ENCODE measurements at regions of chr1 and their contacts with region 1.

Region 1: DNA sequence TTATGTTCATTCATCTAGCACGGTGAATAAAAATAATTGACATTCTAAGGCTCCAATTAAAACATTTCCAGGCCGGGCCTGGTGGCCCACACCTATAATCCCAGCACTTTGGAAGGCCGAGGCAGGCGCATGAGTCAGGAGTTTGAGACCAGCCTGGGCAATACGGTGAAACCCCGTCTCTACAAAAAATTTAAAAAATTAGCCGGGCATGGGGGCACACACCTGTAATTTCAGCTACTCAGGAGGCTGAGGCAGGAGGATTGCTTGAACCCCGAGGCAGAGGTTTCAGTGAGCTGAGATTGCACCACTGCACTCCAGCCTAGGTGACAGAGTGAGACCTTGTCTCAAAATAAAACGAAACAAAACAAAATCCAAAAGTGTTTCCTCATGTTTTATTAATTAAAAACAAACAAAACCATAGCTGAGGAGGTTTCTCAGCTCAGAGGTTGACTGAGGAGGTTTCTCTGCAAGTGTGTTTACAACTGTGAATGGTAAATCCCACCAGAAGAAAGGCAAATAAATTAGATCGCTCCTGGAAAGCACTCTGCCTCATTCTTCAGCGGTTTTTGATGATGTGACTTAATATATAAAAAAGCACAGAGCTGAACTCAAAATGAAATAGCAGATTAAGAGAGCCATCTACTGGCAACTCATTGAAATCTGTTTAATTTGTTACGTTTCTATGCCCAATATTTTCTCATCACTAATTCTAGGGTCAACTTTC is 37.7 kb upstream of the ATG4C start:
- DNase-seq: no peak
- H3K4me3 Mint-ChIP-seq: peak overlapping the region; percentile 17
- H3K27ac Mint-ChIP-seq: no peak overlapping the region
- H3K4me1 Mint-ChIP-seq: no peaks in the 10 kb centered on the region
- H3K27me3 Mint-ChIP-seq: no peaks in the 10 kb centered on the region
- CTCF ChIP-seq: peak; percentile 46

Region 2: DNA sequence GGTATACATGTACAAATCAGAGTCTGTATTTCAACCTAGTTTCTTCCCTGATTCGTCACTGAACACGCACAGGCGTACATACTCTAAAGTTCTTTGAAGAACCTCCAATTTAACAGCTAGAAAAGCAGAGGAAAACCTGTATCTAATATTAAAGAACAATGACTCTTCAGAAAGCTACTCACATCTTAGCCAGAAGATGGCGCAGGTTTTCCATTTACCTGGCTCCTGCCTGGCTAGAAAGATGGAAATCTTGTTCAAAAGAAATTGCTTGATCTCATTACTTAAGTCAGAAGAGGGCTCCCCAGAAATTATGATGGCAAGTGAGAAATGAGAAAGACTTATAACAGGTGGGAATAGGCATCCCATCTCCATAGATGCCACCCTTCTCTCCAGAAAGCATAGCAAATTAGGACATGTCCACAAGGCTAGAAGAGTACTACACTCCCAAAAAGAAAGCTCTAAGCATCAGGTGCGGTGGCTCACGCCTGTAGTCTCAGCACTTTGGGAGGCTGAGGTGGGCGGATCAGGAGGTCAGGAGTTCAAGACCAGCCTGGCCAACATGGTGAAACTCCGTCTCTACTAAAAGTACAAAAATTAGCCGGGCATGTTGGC is 570.6 kb before region 1 on chr1:
- CTCF ChIA-PET with region 1: no interaction called
- intact Hi-C with region 1: loop called (anchors 2 kb)
- DNase-seq: peak; percentile 40
- H3K4me3 Mint-ChIP-seq: no peak overlapping the region
- H3K27ac Mint-ChIP-seq: no peak overlapping the region
- H3K4me1 Mint-ChIP-seq: peaks cover 7% of the 10 kb centered on the region
- H3K27me3 Mint-ChIP-seq: no peaks in the 10 kb centered on the region
- CTCF ChIP-seq: peak; percentile 59

Region 3: DNA sequence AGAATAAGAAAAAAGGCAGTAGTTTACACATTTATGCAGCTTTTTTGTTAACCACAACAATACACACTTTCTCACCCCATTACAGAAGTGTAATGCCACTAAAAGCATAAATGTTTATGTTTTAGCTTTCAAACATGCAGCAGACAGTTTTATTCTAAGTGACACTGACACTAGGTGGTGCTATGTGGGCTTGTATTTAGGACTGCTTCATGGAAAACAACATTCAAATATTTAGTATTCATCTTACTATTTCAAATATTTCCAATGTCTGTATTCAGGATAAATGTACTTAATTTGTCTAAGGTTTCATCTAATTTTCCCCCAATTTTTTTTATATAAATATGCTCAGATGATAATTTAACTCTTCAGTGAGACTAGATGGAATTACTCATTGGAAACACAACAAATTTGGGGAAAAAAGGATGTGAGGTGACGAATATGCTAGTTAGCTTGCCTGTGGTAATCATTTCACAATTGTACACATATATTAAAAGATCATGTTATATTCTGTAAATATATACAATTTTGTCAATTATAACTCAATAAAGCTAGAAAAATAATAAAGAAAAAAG is 238.0 kb before region 1 on chr1:
- CTCF ChIA-PET with region 1: interaction called, 23 read pairs
- intact Hi-C with region 1: loop called (anchors 1 kb)
- DNase-seq: peak; percentile 28
- H3K4me3 Mint-ChIP-seq: no peak overlapping the region
- H3K27ac Mint-ChIP-seq: no peak overlapping the region
- H3K4me1 Mint-ChIP-seq: no peaks in the 10 kb centered on the region
- H3K27me3 Mint-ChIP-seq: no peaks in the 10 kb centered on the region
- CTCF ChIP-seq: peak; percentile 48

Region 4: DNA sequence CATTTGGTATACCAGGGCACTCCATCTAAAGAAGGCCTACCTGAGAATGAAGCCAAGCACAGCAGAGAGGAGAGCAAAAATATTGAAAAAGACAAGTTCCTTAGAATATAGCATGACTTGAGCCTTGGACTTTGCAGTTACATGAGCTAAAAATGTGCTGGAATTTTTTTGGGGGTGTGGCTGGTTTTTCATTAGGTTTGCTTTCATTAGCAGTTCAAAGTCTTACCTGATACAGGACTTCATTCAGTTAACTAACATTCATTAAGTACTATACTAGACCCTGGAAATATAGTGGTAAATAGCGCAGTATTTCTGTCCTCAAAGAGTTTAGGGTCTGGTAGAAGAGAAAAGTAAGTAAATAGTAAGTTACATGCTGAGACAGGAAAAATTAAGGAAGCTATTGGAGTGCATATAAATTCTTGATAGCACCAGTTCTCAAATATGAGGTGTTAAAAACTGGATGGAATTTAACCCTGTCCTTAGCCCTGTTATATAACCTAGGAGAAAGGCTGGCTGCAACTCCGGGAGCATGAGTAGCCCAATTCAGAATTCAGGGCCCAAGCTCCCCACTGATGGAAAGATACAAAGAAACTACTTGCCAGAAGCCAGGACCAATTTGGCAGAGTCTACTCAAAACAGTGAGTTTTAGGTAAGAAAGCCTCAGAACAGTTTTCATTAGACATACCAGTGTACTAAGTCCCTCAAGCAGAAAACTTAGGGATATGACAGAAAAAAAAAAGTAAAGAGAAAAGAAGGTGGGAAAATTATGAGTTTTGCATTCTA is 55.0 kb before region 1 on chr1:
- CTCF ChIA-PET with region 1: no interaction called
- intact Hi-C with region 1: loop called (anchors 2 kb)
- DNase-seq: no peak
- H3K4me3 Mint-ChIP-seq: peak overlapping the region; percentile 89
- H3K27ac Mint-ChIP-seq: peak overlapping the region; percentile 52
- H3K4me1 Mint-ChIP-seq: peaks cover 38% of the 10 kb centered on the region
- H3K27me3 Mint-ChIP-seq: no peaks in the 10 kb centered on the region
- CTCF ChIP-seq: no peak